Esophagus muscularis mucosa (tissue), 4 donors: ENCODE measurements at regions of chr22 and their contacts with region 1.

Region 1: DNA sequence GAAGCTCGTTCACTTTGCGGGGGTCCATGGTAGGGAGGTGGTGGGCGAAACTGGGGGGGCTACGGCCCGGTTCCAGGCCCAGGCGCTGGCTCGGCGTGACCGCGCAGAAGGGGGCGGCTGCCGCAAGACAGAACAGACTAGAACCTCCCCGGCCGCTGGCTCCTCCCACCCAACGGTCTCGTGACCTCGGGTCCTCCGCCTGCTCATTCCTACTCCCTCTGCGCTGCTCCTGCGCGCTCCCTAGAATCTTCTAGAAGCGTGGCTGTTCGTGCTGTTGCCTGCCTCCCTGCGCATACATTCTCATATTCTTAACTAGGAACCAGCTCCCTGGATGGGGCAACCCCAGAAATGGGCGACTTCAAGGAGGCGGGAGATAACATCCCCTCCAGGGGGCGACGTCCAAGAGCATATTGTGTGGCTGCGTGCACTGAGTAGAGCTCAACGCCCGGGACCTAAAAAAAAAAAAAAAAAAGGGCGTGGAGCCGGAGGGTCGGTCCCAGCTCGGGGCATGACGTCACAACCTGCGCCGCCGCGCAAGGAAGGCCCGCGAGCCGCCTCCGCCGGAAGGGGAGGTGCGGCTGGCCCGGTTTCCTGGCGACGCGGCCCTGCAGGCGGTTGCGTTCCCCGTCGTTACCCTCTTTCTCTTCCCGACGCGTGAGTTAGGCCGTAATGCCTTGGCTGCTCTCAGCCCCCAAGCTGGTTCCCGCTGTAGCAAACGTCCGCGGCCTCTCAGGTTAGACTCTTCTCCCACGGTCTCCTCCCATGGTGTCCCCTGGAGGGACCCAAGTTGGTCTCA is at the starts of genes ST13 and XPNPEP3:
- DNase-seq: peak; percentile 99
- H3K4me3 ChIP-seq: peak within 1 kb of the TSS; percentile 61 to 94 (median 92)
- H3K27ac ChIP-seq: peak within 1 kb of the TSS; percentile 89 to 99 (median 97)
- H3K4me1 ChIP-seq: peaks cover 46 to 57% (median 54%) of the 10 kb centered on the region in 4 donors
- H3K27me3 ChIP-seq: no peaks in the 10 kb centered on the region
- CTCF ChIP-seq: peak in 1 of 3 experiments; percentile 6
- EP300 ChIP-seq: no peak
- POLR2A ChIP-seq: peak; percentile 63
- total RNA-seq, gene ST13: 169 to 193 (median 189) TPM
- total RNA-seq, gene XPNPEP3: 7.6 to 15.8 (median 10.2) TPM

Region 2: DNA sequence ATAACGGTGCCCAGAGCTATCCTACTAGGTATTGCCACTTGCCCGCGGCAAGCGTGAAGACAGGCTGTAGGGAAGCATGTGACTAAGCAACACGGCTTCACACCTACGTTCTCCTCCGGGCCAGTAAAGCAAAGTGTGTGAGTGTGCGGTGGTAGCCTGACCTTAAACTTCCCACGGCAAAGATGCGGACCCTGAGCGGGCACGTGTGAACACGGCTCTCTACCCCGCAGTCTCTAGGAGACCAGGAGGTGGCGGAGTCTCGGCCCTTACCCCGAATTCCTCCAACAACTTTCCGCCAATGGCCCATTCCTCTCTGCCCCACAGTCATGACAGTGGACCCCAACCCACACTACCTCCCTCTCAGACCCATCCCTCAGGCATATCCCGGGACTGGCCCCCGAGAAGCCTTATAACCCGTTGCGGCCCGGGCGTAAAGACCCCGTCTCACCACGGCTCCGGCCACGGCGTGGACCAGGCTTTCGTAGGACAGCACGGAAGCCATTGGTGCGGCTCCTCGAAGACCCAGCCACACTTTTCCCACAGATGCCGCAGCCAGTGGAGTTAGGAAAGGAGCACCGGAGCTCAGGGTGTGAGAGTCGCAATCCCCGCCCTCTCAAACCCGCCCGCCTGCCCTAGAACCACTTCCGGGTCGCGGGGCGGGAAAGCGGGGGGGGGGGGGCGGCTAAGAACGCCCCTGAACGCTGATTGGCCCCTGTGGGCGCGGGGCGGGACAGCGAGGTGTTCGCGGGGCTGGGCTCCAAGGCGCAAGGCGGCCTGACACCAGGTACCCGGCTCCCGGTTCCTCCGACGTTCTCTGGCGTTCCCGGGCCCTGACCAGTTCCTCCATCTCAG is 37.7 kb before region 1 on chr22 and contains the start of gene SLC25A17:
- intact Hi-C with region 1: loop called (anchors 5 kb)
- DNase-seq: peak; percentile 99
- H3K4me3 ChIP-seq: peak within 1 kb of the TSS; percentile 89 to 100 (median 95)
- H3K27ac ChIP-seq: peak within 1 kb of the TSS; percentile 78 to 85 (median 83)
- H3K4me1 ChIP-seq: peaks cover 20 to 34% (median 30%) of the 10 kb centered on the region in 4 donors
- H3K27me3 ChIP-seq: no peaks in the 10 kb centered on the region
- CTCF ChIP-seq: peak; percentile 26 to 54 (median 35)
- EP300 ChIP-seq: no peak
- POLR2A ChIP-seq: no peak
- total RNA-seq, gene SLC25A17: 5.8 to 9.6 (median 8.4) TPM

Region 3: GRCh38 chr22:40939202-40939601 is 82.5 kb after region 1 on chr22:
- intact Hi-C with region 1: no loop called
- DNase-seq: no peak
- H3K4me3 ChIP-seq: no peak overlapping the region
- H3K27ac ChIP-seq: no peak overlapping the region
- H3K4me1 ChIP-seq: no peaks in the 10 kb centered on the region
- H3K27me3 ChIP-seq: no peaks in the 10 kb centered on the region
- CTCF ChIP-seq: no peak
- EP300 ChIP-seq: no peak
- POLR2A ChIP-seq: no peak